ENCODE measurements at regions of chr2 and their contacts with region 1.

Region 1: GRCh38 chr2:37877457-37878315 is 47.4 kb upstream of the RMDN2 start:
- DNase-seq: no peak
- ATAC-seq: peak; percentile 76
- H3K4me3 Mint-ChIP-seq: no peak overlapping the region
- H3K27ac Mint-ChIP-seq: no peak overlapping the region
- H3K4me1 Mint-ChIP-seq: peaks cover 20% of the 10 kb centered on the region
- H3K27me3 Mint-ChIP-seq: peaks cover 12% of the 10 kb centered on the region
- CTCF ChIP-seq: peak; percentile 85

Region 2: DNA sequence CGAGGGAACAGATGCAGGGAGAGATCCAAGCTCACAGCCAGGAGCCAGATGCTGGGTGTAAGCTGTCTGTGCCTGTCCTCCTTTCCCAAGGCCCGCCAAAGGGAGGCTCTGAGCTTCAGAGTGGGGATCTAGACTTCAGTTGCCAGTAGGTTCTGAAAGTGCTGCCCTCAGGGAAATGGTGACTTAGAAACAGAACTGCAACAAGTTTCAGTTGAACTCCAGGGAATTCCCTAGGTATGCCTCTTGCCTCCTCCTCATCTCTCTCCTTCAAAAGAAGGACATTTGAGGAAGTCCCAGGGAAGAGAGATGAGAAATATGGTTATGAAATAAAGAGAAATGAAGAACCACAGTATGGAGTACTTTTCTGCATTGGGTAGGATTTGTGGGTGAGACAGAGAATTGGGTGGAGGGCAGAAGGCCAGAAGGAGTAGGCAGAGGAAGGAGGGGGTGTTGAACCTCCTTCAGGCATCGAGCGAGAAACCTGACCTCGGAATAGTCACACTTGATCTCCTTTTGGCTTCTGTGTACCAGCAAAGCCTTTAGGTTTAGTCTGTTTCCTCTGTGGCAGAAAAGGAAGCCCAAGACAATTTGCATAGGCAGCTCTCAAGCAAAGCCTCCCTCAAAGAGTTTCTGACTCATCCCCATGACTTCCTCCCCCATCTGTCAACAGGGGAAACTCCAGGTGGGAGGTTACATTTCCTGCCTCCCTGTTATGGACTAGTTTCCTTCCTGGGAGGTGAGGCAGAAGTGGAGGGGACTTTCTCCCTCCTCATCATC is 487.5 kb before region 1 on chr2:
- CTCF ChIA-PET with region 1: interaction called, 157 read pairs
- POLR2A ChIA-PET with region 1: interaction called, 4 read pairs
- intact Hi-C with region 1: loop called (anchors 5 kb)
- DNase-seq: peak; percentile 81
- ATAC-seq: peak; percentile 93
- H3K4me3 Mint-ChIP-seq: peak overlapping the region; percentile 16
- H3K27ac Mint-ChIP-seq: peak overlapping the region; percentile 92
- H3K4me1 Mint-ChIP-seq: peaks cover 18% of the 10 kb centered on the region
- H3K27me3 Mint-ChIP-seq: peaks cover 2% of the 10 kb centered on the region
- CTCF ChIP-seq: no peak

Region 3: GRCh38 chr2:37549598-37549997 is 328.1 kb before region 1 on chr2:
- CTCF ChIA-PET with region 1: interaction called, 7 read pairs
- POLR2A ChIA-PET with region 1: no interaction called
- intact Hi-C with region 1: loop called (anchors 10 kb)
- DNase-seq: no peak
- ATAC-seq: no peak
- H3K4me3 Mint-ChIP-seq: no peak overlapping the region
- H3K27ac Mint-ChIP-seq: no peak overlapping the region
- H3K4me1 Mint-ChIP-seq: peaks cover 23% of the 10 kb centered on the region
- H3K27me3 Mint-ChIP-seq: no peaks in the 10 kb centered on the region
- CTCF ChIP-seq: no peak

Region 4: DNA sequence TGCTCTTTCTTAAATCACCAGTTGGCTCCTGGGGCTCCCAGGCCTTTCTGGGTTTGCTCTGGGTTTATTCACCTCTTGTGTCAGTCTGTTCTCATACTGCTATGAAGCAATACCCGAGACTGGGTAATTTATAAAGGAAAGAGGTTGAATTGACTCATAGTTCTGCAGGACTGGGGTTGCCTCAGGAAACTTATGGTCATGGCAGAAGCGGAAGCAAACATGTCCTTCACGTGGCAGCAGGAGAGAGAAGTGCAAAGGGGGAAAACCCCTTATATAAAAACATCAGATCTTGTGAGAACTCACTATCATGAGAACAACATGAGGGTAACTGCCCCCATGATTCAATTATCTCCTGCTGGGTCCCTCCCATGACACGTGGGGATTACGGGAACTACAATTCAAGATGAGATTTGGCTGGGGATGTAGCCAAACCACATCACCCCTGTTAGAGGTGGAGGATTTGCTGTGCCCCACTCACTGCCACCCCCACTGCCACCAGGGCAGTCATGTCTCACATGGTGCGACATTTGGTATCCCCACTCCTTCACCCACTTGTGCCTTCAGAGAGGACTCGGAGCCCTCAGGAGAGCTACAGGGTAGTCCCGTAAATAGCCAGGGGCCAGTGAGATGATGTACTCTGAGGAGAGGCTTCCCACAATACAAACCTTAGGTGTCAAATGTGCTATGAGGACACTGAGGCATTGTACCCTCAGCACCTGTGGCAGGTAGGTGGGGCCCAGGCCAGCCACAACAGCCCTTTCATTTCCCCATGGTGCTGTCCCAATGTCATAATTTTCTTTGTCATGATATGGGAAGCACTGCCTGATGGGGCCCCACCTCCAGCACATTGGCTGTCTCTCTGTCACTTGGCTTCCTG is 241.9 kb before region 1 on chr2:
- CTCF ChIA-PET with region 1: interaction called, 7 read pairs
- POLR2A ChIA-PET with region 1: no interaction called
- intact Hi-C with region 1: loop called (anchors 10 kb)
- DNase-seq: peak; percentile 87
- ATAC-seq: peak; percentile 81
- H3K4me3 Mint-ChIP-seq: peak overlapping the region; percentile 49
- H3K27ac Mint-ChIP-seq: peak overlapping the region; percentile 99
- H3K4me1 Mint-ChIP-seq: peaks cover 70% of the 10 kb centered on the region
- H3K27me3 Mint-ChIP-seq: no peaks in the 10 kb centered on the region
- CTCF ChIP-seq: no peak

Region 5: DNA sequence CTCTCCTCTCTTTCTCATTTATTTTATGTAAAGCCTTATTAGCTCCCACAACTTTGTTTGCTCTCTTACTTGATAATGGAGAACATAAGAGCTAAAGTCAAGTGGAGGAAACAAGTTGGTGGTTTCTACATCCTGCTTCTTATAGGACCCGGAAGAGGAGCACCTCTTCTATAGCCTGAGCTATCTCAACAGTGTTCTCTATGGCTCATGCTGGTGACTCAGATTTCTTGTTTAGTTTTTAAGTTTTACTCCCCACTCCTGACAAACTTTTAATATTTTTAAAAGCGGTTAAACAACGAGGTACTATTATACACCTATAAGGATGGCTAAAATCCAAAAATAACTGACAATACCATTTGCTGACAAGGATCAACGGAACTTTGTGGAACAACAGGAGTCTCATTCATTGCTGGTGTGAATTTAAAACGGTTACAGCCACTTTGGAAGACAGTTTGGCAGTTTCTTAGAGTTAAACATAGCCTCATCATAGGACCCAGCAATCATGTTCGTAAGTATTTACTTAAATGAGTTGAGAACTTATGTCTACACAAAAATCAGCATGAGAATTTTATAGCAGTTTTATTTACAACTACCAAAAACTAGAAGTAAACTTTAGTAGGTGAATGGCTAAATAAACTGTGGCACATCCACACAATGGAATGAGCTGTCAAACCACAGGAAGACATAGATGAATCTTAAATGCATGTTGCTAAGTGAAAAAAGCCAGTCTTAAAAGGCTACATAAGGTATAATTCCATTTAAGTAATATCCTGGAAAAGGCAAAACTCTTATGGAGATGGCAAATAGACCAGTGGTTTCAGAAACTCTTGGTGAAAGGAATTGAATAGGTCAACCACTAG is 193.5 kb before region 1 on chr2:
- CTCF ChIA-PET with region 1: interaction called, 10 read pairs
- POLR2A ChIA-PET with region 1: no interaction called
- intact Hi-C with region 1: no loop called
- DNase-seq: no peak
- ATAC-seq: peak; percentile 93
- H3K4me3 Mint-ChIP-seq: no peak overlapping the region
- H3K27ac Mint-ChIP-seq: peak overlapping the region; percentile 95
- H3K4me1 Mint-ChIP-seq: peaks cover 42% of the 10 kb centered on the region
- H3K27me3 Mint-ChIP-seq: no peaks in the 10 kb centered on the region
- CTCF ChIP-seq: no peak

Region 6: DNA sequence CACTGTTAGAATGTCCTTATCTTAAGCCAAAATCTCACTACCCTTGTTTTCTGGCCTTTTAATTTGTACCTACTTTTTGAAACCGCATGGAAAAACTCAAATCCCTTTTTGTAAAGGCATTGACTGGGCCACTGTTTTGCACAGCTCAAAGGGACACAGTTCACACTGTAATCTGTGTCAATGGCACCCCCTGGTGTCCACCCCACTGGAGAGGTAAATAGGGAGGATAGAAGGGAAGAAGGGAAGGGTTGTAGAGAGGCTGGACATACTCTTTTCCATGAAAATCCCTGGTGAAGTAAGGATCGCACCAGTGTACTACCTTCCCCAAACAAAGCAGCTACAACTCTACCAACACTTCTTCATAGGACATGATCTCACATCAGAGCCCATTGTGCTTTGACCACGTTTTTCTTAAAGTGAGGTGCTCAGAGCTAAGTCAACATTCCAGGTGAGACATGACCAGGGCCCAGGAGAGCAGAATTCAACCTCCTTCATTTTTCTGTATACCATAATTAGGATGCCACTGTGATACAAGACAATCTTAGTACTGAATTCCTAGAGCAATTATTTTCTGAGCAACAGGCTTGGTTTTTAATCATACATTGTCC is 45.0 kb before region 1 on chr2:
- CTCF ChIA-PET with region 1: interaction called, 184 read pairs
- POLR2A ChIA-PET with region 1: interaction called, 3 read pairs
- intact Hi-C with region 1: loop called (anchors 5 kb)
- DNase-seq: peak; percentile 92
- ATAC-seq: peak; percentile 86
- H3K4me3 Mint-ChIP-seq: no peak overlapping the region
- H3K27ac Mint-ChIP-seq: no peak overlapping the region
- H3K4me1 Mint-ChIP-seq: peaks cover 19% of the 10 kb centered on the region
- H3K27me3 Mint-ChIP-seq: no peaks in the 10 kb centered on the region
- CTCF ChIP-seq: peak; percentile 86

Region 7: GRCh38 chr2:37896314-37896713 is 18.6 kb after region 1 on chr2:
- CTCF ChIA-PET with region 1: interaction called, 36 read pairs
- POLR2A ChIA-PET with region 1: no interaction called
- intact Hi-C with region 1: no loop called
- DNase-seq: no peak
- ATAC-seq: peak; percentile 49
- H3K4me3 Mint-ChIP-seq: no peak overlapping the region
- H3K27ac Mint-ChIP-seq: no peak overlapping the region
- H3K4me1 Mint-ChIP-seq: peaks cover 24% of the 10 kb centered on the region
- H3K27me3 Mint-ChIP-seq: no peaks in the 10 kb centered on the region
- CTCF ChIP-seq: no peak